ENCODE measurements at regions of chr11 and their contacts with region 1.

Region 1: GRCh38 chr11:132126973-132127899 is 756.8 kb downstream of the NTM start:
- DNase-seq: peak; percentile 68
- H3K4me3 ChIP-seq: no peak overlapping the region
- CTCF ChIP-seq: peak; percentile 78

Region 2: DNA sequence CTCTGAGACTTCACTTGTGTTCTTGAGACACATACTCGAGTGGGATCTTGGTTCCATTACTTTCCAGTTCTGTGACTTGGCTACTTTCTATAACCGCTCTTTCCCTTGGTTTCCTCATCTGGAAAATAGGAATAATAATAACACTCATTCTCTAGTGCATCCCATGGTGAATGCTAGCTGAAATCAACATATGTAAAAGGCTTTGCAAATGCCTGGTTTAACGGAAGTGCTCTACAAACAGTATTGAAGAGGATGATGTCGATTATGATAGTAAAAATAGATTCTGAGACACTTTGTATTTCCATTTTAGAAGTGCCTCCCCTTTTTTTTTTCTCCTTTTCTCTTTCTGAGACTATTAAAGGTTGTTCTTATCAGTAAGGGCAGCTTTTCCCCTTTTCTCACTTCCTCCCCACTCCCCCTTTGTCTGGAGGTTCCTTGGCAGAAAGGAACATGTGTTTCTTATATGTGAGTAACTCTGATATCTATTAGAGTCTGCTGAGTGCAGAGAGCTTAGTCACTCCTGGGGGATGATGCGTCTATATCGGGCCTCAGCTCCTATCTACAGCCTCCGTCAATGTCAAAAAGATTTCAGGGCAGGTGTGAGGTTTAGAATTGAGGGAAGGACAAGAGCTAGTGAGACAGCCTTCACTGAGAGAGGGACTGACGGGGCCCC is 267.6 kb before region 1 on chr11:
- CTCF ChIA-PET with region 1: interaction called, 121 read pairs
- POLR2A ChIA-PET with region 1: no interaction called
- DNase-seq: no peak
- H3K4me3 ChIP-seq: no peak overlapping the region
- CTCF ChIP-seq: no peak

Region 3: GRCh38 chr11:131918663-131919062 is 208.6 kb before region 1 on chr11:
- CTCF ChIA-PET with region 1: interaction called, 127 read pairs
- POLR2A ChIA-PET with region 1: no interaction called
- DNase-seq: no peak
- H3K4me3 ChIP-seq: no peak overlapping the region
- CTCF ChIP-seq: no peak

Region 4: DNA sequence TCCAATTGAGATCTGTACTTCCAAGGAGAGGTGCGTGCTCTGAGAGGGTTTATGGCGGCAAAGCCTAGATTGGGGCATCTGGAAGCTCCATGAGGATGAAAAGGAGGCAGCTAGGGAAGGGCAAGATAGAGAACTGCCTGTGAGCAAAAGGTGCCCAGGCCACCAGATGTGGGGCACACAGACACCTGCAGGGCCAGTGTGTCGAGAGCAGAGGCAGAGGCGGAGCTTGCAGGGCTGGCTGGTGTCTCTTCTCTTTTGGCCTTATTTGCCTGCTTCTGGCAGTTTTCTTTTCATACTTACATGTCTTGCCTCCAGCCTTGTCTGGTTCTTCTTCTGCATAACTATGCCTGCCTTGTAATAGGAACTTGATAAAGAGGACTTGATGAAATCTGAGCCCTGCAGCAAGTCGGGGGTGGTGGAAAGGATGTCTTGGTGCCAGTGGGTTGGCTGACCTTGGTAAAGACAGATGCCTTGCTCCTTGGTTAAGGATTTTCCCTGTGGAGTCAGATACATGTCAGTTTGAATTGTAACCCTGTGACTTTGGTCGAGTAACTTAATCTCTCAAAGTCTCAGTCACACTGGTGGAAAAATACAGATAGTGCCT is 76.6 kb before region 1 on chr11:
- CTCF ChIA-PET with region 1: interaction called, 31 read pairs
- POLR2A ChIA-PET with region 1: interaction called, 16 read pairs
- DNase-seq: no peak
- H3K4me3 ChIP-seq: no peak overlapping the region
- CTCF ChIP-seq: no peak

Region 5: DNA sequence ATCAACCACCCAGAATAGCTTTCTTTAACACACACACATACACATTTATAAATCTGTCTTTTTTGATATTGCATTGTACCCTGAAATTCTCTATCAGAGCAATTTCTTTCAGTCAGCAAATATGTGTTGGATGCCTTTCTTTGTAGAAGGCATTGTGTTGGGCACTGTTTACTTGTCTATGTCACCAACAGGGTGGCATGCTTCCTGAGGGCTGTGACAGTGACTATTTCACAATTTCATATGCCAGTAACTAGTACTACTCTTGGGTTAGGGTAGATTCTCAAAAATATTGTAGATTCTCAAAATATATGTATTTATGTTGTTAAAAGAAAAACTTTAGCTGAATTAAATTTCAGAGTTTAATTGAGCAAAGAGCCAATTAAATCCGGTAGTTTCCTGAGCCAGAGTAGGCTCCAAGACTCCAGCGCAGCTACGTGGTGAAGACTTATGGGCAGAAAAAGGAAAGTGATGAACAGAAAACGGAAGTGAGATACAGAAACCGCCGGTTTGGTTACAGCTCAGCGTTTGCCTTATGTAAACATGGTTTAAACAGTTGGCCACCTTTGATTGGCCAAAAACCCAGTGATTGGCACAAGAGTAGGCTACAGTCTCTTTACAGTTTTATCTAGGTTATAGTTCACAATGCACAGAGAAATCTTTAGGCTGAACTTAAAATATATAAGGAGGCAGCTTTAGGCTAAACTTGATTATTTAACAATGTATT is 33.5 kb before region 1 on chr11:
- CTCF ChIA-PET with region 1: interaction called, 10 read pairs
- POLR2A ChIA-PET with region 1: no interaction called
- DNase-seq: no peak
- H3K4me3 ChIP-seq: no peak overlapping the region
- CTCF ChIP-seq: no peak

Region 6: GRCh38 chr11:132137981-132138313 is 10.7 kb after region 1 on chr11:
- CTCF ChIA-PET with region 1: interaction called, 27 read pairs
- POLR2A ChIA-PET with region 1: no interaction called
- DNase-seq: no peak
- H3K4me3 ChIP-seq: no peak overlapping the region
- CTCF ChIP-seq: no peak

Region 7: GRCh38 chr11:132202621-132203020 is 75.4 kb after region 1 on chr11:
- CTCF ChIA-PET with region 1: no interaction called
- POLR2A ChIA-PET with region 1: no interaction called
- DNase-seq: peak; percentile 24
- H3K4me3 ChIP-seq: no peak overlapping the region
- CTCF ChIP-seq: no peak

Region 8: GRCh38 chr11:132293586-132293985 is 166.3 kb after region 1 on chr11:
- CTCF ChIA-PET with region 1: no interaction called
- POLR2A ChIA-PET with region 1: no interaction called
- DNase-seq: no peak
- H3K4me3 ChIP-seq: no peak overlapping the region
- CTCF ChIP-seq: no peak

Measured in AG04449 (cell line).